ENCODE measurements at regions of chr17 and their contacts with region 1.

Region 1: DNA sequence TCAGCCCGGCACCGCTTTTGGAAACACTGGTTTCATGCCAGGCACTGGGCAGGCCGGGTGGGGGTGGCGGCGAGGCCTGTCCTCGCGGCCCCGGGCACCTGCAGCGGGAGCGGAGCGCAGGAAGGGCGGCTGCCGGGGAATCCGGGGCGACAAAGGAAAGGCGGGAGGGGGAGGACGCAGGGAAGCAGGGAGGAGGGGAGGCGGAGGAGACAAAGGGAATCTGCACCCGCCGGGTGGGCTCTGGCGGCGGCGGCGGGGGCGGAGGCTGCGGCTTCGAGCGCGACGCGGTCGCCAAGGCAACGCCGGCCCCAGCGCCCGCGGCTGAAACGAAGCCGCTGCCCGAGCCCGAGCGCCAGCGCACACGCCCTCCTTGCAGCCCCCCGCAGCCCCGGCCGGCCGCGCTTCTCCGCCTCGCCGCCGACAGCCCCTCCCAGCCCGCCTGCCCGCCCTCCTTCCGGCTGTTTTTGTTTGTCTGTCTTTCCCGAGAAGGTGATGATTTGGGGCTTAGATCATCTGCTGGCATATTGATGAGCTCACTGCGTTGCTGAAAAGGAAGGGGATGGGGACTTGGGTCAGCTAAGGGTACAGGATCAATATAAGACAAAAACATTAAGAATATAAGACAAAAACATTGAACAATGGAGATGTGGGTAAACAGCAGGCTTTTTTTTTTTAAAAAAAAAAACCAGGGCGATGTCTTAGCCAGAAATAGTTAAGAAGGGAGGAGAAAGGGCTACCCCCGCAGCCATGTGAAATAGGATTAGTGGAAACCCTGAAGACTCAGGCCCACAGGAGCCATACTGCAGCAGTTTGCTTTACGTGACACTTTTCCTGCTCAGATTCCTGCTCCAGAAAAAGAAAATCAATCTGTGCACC is 32.7 kb downstream of the CDK5R1 start:
- DNase-seq: peak; percentile 80
- ATAC-seq: peak; percentile 26
- H3K4me3 ChIP-seq: peak overlapping the region; percentile 33 to 68 (median 47)
- H3K4me3 Mint-ChIP-seq: peak overlapping the region; percentile 88
- H3K27ac ChIP-seq: peak overlapping the region; percentile 69 to 79
- H3K27ac Mint-ChIP-seq: peak overlapping the region; percentile 90
- H3K4me1 ChIP-seq: peaks cover 90 to 96% of the 10 kb centered on the region in 2 donors
- H3K4me1 Mint-ChIP-seq: peaks cover 85% of the 10 kb centered on the region
- H3K27me3 ChIP-seq: no peaks in the 10 kb centered on the region
- H3K27me3 Mint-ChIP-seq: no peaks in the 10 kb centered on the region
- CTCF ChIP-seq: no peak

Region 2: DNA sequence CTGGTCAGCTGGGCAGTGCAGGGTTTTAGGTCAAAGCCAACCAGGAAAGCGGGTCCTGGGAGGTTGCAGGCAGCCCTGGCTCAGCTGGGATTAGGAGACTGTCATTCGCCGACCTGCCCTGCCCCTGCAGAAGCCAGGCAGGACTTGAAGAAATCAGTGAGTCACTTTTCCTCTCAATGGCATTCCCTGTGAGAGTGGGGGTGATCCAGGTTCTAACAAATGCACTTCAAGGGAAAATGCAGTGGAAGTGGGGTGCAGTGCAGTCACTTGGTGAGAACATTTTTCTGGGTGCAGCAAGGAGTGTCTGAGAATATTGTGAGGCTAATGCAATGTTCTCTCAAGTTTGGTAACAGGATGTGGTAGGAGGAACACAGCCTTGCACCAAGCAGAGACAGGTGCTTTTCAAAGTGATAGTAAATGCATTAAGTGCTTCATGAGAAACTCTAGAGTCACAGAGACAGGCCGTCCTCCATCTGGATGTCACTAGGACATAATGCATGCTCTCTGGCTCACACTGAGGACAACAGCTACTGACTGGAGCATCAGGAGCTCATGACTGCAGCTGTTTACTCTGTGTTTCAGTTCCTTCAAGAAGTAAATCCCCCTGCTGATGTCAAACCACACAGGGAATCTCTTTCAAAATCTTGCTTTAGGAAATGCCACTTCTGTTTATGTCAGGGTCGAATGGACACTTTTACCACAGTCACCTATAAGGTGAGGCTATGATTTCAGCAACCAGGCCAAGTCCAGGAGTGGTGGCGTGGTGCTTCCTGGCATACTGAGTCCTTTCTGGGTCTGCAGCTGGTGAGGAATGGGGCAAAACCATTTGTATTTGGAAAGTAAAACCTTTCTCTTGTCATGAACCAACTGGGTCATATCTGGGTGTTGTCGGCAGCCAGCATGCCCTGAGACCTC is 16.0 kb before region 1 on chr17:
- CTCF ChIA-PET with region 1: interaction called, 7 read pairs
- POLR2A ChIA-PET with region 1: interaction called, 5 read pairs
- intact Hi-C with region 1: loop called (anchors 1 kb)
- DNase-seq: peak; percentile 89
- ATAC-seq: peak; percentile 92
- H3K4me3 ChIP-seq: peak overlapping the region in 3 of 5 experiments; percentile 0 to 17 (median 15)
- H3K4me3 Mint-ChIP-seq: peak overlapping the region; percentile 81
- H3K27ac ChIP-seq: peak overlapping the region; percentile 95
- H3K27ac Mint-ChIP-seq: peak overlapping the region; percentile 98
- H3K4me1 ChIP-seq: peaks cover 50% of the 10 kb centered on the region in 2 donors
- H3K4me1 Mint-ChIP-seq: peaks cover 50% of the 10 kb centered on the region
- H3K27me3 ChIP-seq: no peaks in the 10 kb centered on the region
- H3K27me3 Mint-ChIP-seq: no peaks in the 10 kb centered on the region
- CTCF ChIP-seq: no peak

Region 3: DNA sequence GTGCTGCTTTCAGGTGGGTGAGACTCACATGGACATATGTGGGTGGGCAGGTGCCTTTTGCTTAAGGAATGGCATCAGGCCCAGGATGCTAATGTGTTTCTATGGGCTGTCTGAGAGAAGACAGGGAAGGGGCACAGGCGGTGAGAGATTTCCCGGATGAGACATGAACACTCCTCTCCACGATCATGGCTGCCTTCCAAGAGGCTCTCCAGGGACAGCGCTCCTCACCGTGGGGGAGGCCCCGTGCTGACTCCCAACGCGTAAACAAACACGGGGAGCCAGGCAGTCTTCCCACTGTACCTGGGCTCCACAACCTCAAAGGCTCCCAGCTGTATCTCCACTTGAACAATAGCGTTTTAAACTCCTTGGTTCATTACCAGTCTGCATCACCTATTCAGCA is 10.1 kb after region 1 on chr17:
- CTCF ChIA-PET with region 1: interaction called, 10 read pairs
- POLR2A ChIA-PET with region 1: interaction called, 3 read pairs
- intact Hi-C with region 1: no loop called
- DNase-seq: no peak
- ATAC-seq: no peak
- H3K4me3 ChIP-seq: no peak overlapping the region
- H3K4me3 Mint-ChIP-seq: no peak overlapping the region
- H3K27ac ChIP-seq: no peak overlapping the region
- H3K27ac Mint-ChIP-seq: no peak overlapping the region
- H3K4me1 ChIP-seq: peaks cover 16 to 31% of the 10 kb centered on the region in 2 donors
- H3K4me1 Mint-ChIP-seq: peaks cover 34% of the 10 kb centered on the region
- H3K27me3 ChIP-seq: no peaks in the 10 kb centered on the region
- H3K27me3 Mint-ChIP-seq: no peaks in the 10 kb centered on the region
- CTCF ChIP-seq: no peak

Region 4: GRCh38 chr17:32558997-32559650 is 39.7 kb after region 1 on chr17:
- CTCF ChIA-PET with region 1: interaction called, 3 read pairs
- POLR2A ChIA-PET with region 1: no interaction called
- intact Hi-C with region 1: loop called (anchors 2 kb)
- DNase-seq: peak; percentile 50
- ATAC-seq: no peak
- H3K4me3 ChIP-seq: no peak overlapping the region
- H3K4me3 Mint-ChIP-seq: peak overlapping the region; percentile 52
- H3K27ac ChIP-seq: peak overlapping the region; percentile 69 to 76
- H3K27ac Mint-ChIP-seq: peak overlapping the region; percentile 75
- H3K4me1 ChIP-seq: peaks cover 41% of the 10 kb centered on the region in 2 donors
- H3K4me1 Mint-ChIP-seq: peaks cover 42% of the 10 kb centered on the region
- H3K27me3 ChIP-seq: no peaks in the 10 kb centered on the region
- H3K27me3 Mint-ChIP-seq: no peaks in the 10 kb centered on the region
- CTCF ChIP-seq: no peak

Region 5: DNA sequence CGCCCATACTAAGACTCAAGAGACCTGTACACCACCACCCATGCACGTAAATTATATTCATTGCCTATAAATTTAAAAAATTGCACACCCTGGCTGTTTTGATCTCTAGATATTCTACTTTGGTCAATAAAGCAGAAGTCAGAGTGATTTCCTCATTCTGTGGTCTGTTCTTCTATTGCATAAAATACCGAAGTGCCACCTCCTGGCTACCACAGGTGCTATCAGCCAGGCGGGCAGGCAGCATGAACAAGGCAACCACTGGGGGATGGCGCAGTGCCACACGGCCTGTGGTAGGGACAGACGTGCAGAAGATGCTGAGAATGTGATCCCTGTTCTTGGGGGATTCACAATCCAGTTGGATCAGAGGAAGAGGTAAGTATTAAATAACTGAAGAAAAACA is 89.6 kb after region 1 on chr17:
- CTCF ChIA-PET with region 1: interaction called, 21 read pairs
- POLR2A ChIA-PET with region 1: no interaction called
- intact Hi-C with region 1: loop called (anchors 5 kb)
- DNase-seq: peak; percentile 85
- ATAC-seq: peak; percentile 100
- H3K4me3 ChIP-seq: no peak overlapping the region
- H3K4me3 Mint-ChIP-seq: no peak overlapping the region
- H3K27ac ChIP-seq: no peak overlapping the region
- H3K27ac Mint-ChIP-seq: no peak overlapping the region
- H3K4me1 ChIP-seq: peaks cover 6 to 8% of the 10 kb centered on the region in 2 donors
- H3K4me1 Mint-ChIP-seq: peaks cover 9% of the 10 kb centered on the region
- H3K27me3 ChIP-seq: no peaks in the 10 kb centered on the region
- H3K27me3 Mint-ChIP-seq: no peaks in the 10 kb centered on the region
- CTCF ChIP-seq: peak; percentile 82